ENCODE measurements at regions of chr17 and their contacts with region 1.

Region 1: GRCh38 chr17:45385331-45385997 is 47.2 kb downstream of the ARHGAP27 start:
- DNase-seq: peak; percentile 97
- H3K4me3 Mint-ChIP-seq: no peak overlapping the region
- H3K27ac Mint-ChIP-seq: no peak overlapping the region
- H3K4me1 Mint-ChIP-seq: peaks cover 35% of the 10 kb centered on the region
- H3K27me3 Mint-ChIP-seq: peaks cover 22% of the 10 kb centered on the region
- CTCF ChIP-seq: peak; percentile 100

Region 2: GRCh38 chr17:45148183-45149036 is 237.1 kb before region 1 on chr17 and contains the start of gene HEXIM1:
- CTCF ChIA-PET with region 1: no interaction called
- intact Hi-C with region 1: loop called (anchors 10 kb)
- DNase-seq: peak; percentile 100
- H3K4me3 Mint-ChIP-seq: peak within 1 kb of the TSS; percentile 98
- H3K27ac Mint-ChIP-seq: peak within 1 kb of the TSS; percentile 100
- H3K4me1 Mint-ChIP-seq: peaks cover 39% of the 10 kb centered on the region
- H3K27me3 Mint-ChIP-seq: peaks cover 14% of the 10 kb centered on the region
- CTCF ChIP-seq: no peak
- total RNA-seq, gene HEXIM1: 57.2 and 64.7 TPM in 2 replicates

Region 3: GRCh38 chr17:45235416-45236281 is 149.8 kb before region 1 on chr17:
- CTCF ChIA-PET with region 1: interaction called, 4 read pairs
- intact Hi-C with region 1: loop called (anchors 5 kb)
- DNase-seq: peak; percentile 86
- H3K4me3 Mint-ChIP-seq: no peak overlapping the region
- H3K27ac Mint-ChIP-seq: no peak overlapping the region
- H3K4me1 Mint-ChIP-seq: peaks cover 13% of the 10 kb centered on the region
- H3K27me3 Mint-ChIP-seq: peaks cover 56% of the 10 kb centered on the region
- CTCF ChIP-seq: peak; percentile 92

Region 4: DNA sequence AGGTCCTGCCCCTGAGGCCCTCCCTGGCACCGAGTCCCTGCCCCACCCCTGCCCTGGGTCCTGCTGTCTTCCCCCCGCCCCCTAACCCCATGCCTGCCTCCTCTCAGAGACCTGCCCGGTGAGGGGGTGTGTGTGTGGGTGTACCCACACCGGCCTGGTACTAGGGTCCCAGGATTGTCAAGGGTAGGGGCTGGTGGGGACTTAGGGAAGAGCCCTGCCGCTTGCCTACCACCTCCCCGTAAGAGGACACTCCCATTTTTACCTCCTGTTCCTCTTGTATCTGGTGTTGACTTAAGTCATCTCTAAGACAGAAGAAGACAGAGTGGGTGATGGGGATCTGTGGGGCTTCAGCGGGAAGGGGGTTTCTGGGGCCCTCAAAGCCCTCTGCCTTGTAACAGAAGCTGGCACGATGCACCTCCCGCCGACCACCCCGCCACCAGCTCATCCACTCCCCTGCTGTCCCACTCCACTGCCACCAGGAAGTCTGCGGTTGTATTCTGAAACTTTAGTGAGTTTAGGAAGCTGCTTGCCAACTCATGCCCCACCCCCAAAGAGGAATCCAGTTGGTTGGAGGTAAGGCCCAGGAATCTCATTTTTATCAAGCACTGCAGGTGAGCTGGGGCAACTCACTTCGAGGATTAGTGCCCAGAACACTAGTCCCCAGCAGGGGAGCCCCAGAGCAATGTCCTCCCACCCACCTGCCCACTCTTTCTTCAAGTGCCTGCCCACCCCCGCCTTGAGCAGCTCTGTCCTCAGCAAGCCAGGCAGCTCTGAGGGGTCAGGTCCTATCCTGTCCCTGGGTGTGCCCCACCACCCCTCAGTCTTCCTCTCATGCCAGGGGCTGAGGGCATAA is 129.1 kb before region 1 on chr17:
- CTCF ChIA-PET with region 1: no interaction called
- intact Hi-C with region 1: no loop called
- DNase-seq: peak; percentile 43
- H3K4me3 Mint-ChIP-seq: no peak overlapping the region
- H3K27ac Mint-ChIP-seq: no peak overlapping the region
- H3K4me1 Mint-ChIP-seq: peaks cover 7% of the 10 kb centered on the region
- H3K27me3 Mint-ChIP-seq: no peaks in the 10 kb centered on the region
- CTCF ChIP-seq: no peak

Region 5: GRCh38 chr17:45277216-45277849 is 108.1 kb before region 1 on chr17:
- CTCF ChIA-PET with region 1: interaction called, 49 read pairs
- intact Hi-C with region 1: loop called (anchors 1 kb)
- DNase-seq: peak; percentile 95
- H3K4me3 Mint-ChIP-seq: no peak overlapping the region
- H3K27ac Mint-ChIP-seq: no peak overlapping the region
- H3K4me1 Mint-ChIP-seq: peaks cover 13% of the 10 kb centered on the region
- H3K27me3 Mint-ChIP-seq: no peaks in the 10 kb centered on the region
- CTCF ChIP-seq: peak; percentile 84

Region 6: DNA sequence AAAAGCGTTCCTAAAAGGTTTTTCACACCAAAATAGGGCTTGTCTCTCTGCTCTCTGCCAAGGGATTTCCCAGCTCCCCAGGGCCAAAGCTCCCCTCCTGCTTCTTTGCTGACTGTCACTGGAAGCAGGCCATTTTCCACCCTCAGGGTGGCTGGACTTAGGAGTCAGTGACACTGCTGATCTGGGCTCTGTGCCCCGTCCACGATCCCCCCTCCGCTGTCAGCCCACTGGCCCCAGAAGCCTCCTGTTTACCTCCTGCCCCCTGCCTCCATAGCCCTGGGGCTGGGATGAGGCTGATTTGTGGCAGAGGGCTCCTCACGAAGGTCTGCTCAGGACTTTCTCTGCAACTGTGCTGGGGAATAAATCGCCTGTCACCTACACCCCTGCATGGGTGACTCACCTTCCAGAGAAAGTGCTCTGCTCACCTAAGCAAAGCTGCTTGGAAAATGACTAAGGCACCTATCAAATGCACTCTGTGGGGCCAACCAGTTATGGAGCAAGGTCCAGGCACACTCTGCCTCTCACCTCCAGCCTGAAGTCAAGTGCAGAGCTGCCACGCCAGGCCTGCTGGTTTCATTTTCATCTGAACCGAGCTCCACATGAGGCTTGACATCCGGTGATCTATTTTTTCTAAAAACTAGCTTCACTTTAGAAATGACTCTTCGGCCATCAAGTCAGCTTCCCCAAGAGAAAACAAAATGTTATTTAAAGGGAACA is 73.5 kb before region 1 on chr17:
- CTCF ChIA-PET with region 1: interaction called, 10 read pairs
- intact Hi-C with region 1: loop called (anchors 2 kb)
- DNase-seq: peak; percentile 90
- H3K4me3 Mint-ChIP-seq: peak overlapping the region; percentile 88
- H3K27ac Mint-ChIP-seq: peak overlapping the region; percentile 85
- H3K4me1 Mint-ChIP-seq: peaks cover 88% of the 10 kb centered on the region
- H3K27me3 Mint-ChIP-seq: no peaks in the 10 kb centered on the region
- CTCF ChIP-seq: no peak

Measured in Calu3 (cell line).